ENCODE measurements at regions of chr22 and their contacts with region 1.

Region 1: DNA sequence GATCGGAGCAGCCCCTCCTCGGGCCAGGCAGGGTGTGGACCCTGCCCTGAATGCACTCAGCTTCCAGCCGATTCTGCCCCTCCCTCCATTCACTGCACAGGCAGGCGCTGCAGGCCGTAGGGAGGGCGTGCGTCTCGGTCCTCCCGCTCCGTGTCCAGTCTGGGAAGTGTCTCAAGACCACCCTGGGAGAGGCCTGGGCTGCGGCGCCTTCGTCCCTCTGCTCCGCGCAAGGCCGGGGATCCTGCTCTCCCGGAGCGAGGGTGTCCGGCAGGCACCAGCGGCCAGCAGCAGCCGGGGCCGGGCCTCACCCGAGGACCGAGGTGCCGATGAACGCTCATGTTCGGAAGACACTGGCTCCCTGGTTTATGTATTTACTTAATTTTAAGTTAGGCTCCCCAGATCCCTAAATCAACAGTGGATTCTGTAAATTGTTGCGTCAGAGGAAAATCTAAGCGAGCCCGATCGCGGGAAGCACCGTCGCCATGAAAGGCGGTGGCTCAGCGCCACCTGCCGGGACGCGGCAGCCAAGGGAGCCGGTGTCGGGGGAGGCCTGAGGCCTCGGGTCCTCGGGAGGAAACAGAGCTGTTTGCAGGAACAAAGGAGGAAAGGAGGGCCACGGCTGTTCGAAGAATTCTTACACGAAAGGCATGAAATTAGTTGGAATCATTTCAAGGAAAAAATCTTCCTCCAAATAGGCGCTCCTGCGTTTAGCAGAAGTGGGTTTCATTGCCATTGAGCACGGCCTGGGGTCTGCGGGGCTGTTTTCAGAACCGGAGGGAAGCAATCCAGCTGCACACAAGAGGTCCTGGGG is 195.3 kb downstream of the BRD1 start:
- DNase-seq: peak; percentile 54 to 97 (median 76)

Region 2: DNA sequence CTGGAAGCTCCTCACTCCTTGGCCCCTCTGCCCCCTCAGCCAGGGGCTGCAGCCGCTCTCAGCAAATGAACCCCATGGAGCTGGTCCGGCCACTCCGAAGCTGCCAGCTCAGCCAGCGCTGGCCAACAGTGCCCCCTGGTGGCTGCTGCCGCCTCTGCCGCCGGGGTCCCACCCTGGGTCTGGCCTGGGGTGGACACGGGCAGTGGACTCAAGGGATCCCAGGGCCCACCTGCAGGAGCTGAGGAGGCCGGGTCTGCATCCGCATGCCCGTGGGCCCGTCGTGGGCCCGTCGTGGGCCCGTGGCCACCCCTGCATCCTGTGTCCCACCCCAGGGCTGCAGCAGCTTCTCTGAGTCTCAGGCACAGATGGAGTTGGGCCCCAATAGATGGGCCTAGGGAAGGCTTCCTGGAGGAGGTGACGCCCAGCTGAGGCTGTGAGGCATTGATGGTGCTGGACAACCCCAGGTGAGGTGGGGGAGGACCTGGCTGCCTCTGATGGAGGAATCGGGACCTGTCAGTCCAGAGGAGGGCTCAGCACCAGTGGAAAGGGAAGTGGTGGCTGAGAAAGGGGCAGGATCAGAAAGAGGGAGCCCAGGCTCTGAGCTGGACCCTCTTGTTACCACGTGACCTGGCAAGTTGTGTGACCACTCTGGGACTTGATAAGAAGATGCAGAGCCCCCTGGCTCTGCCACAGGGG is 327.0 kb before region 1 on chr22:
- intact Hi-C with region 1: loop called (anchors 10 kb)
- DNase-seq: peak; percentile 54 to 97 (median 86)

Region 3: DNA sequence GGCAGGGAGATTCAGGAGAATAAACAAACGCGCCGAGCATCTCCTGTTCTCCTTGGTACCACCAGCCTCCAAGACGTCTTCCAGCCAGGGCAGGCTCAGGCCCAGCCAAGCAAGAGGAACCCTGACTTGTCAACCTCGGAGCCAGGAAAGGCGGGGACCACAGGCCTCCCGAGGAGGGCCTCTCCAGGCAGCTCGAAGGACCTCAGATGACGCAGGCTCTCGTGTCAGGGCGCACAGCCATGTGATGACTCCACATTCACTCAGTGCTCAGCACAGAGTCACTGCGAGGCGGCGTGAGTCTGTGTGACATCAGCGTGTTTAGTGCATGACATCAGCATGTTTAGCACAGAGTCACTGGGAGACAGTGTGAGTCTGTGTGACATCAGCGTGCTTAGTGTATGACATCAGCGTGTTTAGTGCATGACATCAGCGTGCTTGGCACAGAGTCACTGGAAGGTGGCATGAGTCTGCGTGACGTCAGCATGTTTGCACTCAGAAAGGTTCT is 46.1 kb before region 1 on chr22:
- intact Hi-C with region 1: no loop called
- DNase-seq: peak in 2 of 10 donors; percentile 62 to 77